ENCODE measurements at regions of chr11 and their contacts with region 1.

Region 1: DNA sequence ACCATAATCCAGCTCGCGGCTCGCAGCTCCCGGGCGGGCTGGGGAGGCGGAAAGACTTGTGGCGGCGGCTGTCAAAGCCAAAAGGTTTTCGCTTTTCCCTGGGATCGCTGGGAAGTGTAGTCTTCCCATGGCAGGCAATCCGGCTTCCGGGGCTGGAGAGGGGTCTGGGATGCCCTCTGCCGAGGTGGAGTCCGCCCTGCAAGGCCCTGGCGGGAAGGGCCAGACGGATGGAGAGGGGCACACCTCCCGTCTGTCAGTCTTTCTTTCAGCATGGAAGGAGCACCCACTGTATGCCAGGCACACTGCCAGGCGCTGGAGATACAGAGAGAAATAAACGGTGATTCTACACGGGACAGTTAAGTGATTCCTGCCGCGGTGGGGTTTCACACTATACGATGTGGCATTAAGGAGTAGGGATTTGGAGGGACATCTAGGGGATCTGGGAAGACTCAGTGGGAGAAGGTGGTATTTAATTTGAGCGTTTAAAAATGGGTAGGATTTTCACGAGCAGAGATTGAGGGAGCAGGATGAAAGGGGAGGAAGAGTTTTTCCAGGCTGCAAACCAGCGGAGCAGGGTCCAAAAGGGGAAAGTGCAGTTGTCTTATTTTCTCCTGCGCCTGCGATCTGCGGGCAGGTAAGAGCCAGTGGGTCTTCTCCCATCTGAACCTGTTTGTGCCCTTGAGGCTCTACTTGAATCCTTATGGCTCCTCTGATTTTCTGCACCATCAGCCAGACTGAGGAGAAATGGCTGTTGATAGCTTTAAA is at the start of gene BACE1:
- DNase-seq: peak; percentile 91

Region 2: DNA sequence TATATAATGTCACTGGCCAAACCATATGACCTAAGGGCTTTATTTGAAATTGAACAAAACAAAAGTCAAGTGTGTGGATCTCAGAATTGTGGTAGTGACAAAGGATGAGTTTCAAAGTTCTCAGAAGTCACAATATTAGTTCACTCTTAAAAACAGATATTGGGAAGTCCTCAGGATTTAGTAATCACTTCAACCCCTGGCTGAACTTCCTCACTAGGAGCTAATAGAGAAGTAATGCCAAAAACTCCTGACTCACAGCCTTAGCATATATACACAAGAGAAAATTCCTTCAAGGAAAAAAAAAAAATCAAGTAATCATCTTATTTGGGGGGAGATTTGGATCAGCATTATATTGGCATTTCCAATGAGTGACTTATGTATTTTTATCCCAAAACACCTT is 403.4 kb before region 1 on chr11:
- CTCF ChIA-PET with region 1: interaction called, 10 read pairs
- POLR2A ChIA-PET with region 1: no interaction called
- DNase-seq: no peak

Region 3: GRCh38 chr11:117287668-117288067 is 28.7 kb before region 1 on chr11:
- CTCF ChIA-PET with region 1: no interaction called
- POLR2A ChIA-PET with region 1: no interaction called
- DNase-seq: no peak

Region 4: GRCh38 chr11:117327567-117328374 is 11.4 kb after region 1 on chr11 and contains the start of gene CEP164:
- CTCF ChIA-PET with region 1: interaction called, 7 read pairs
- POLR2A ChIA-PET with region 1: interaction called, 16 read pairs
- DNase-seq: peak; percentile 97